ENCODE measurements at regions of chr14 and their contacts with region 1.

Region 1: DNA sequence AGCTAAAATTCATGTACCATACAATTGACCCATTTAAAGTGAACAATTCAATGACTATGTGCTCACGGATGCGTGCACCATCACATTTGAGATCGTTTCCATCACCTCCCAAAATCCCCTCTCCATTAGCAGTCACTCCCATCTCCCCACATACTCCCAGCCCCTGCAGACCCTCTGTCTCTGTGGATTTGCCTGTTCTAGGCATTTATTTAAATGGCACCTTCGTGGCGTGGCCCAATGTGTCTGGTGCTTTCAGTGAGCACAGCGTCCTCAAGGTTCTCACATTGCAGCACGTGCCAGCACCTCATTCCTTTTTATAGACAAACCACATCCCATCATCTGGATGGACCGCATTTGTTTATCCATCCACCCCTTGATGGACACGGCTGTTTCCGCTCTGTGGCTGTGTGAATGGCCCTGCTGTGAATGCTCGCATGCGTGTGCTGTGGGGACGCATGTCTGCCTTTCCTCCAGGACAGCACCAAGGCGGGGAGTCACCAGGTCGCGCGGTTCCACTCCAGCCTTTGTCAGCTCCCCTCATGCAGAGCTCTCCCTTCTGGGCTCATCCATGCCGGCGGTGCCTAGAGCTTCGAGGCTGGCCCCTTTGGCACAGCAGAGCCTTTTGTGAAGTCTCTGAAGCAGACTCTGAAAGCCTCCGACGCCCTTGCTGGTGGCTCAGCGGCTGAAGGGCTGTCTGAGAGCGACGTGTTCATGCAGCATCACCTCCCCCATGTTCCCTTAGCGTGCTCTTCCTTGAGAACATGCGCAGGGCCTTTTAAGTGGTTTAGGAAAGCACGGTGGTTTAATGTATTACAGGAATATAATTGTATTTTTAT is 184.4 kb downstream of the KIF26A start:
- DNase-seq: peak; percentile 17
- H3K4me3 ChIP-seq: no peak overlapping the region
- H3K27ac ChIP-seq: no peak overlapping the region
- H3K4me1 ChIP-seq: peaks cover 0 to 35% (median 19%) of the 10 kb centered on the region in 4 donors
- H3K27me3 ChIP-seq: peaks cover 0 to 38% (median 0%) of the 10 kb centered on the region in 3 donors
- CTCF ChIP-seq: no peak
- EP300 ChIP-seq: no peak
- POLR2A ChIP-seq: no peak

Region 2: GRCh38 chr14:104424406-104425072 is 101.8 kb after region 1 on chr14:
- intact Hi-C with region 1: loop called (anchors 10 kb)
- DNase-seq: peak; percentile 50
- H3K4me3 ChIP-seq: no peak overlapping the region
- H3K27ac ChIP-seq: no peak overlapping the region
- H3K4me1 ChIP-seq: peaks cover 0 to 27% (median 20%) of the 10 kb centered on the region in 4 donors
- H3K27me3 ChIP-seq: peaks cover 0 to 22% (median 0%) of the 10 kb centered on the region in 3 donors
- CTCF ChIP-seq: no peak
- EP300 ChIP-seq: no peak
- POLR2A ChIP-seq: no peak